Activated CD8-positive, alpha-beta T cell treated with anti-CD3 and anti-CD28 coated beads for 36 hours (primary cell): ENCODE measurements at regions of chr11 and their contacts with region 1.

Region 1: GRCh38 chr11:34105079-34105956 is at the start of gene NAT10:
- DNase-seq: peak; percentile 98
- ATAC-seq: peak; percentile 93
- H3K4me3 Mint-ChIP-seq: peak within 1 kb of the TSS; percentile 97
- H3K27ac Mint-ChIP-seq: peak within 1 kb of the TSS; percentile 97
- H3K4me1 Mint-ChIP-seq: peaks cover 42% of the 10 kb centered on the region
- H3K27me3 Mint-ChIP-seq: no peaks in the 10 kb centered on the region
- CTCF ChIP-seq: no peak
- total RNA-seq, gene NAT10: 129 to 137 TPM

Region 2: GRCh38 chr11:34051349-34052035 is 53.8 kb before region 1 on chr11 and contains the start of gene CAPRIN1:
- CTCF ChIA-PET with region 1: no interaction called
- POLR2A ChIA-PET with region 1: interaction called, 13 read pairs
- intact Hi-C with region 1: loop called (anchors 2 kb)
- DNase-seq: peak; percentile 88
- ATAC-seq: peak; percentile 79
- H3K4me3 Mint-ChIP-seq: peak within 1 kb of the TSS; percentile 97
- H3K27ac Mint-ChIP-seq: peak within 1 kb of the TSS; percentile 99
- H3K4me1 Mint-ChIP-seq: peaks cover 15% of the 10 kb centered on the region
- H3K27me3 Mint-ChIP-seq: no peaks in the 10 kb centered on the region
- CTCF ChIP-seq: no peak
- total RNA-seq, gene CAPRIN1: 297 to 328 TPM

Region 3: GRCh38 chr11:34068111-34068510 is 37.2 kb before region 1 on chr11:
- CTCF ChIA-PET with region 1: no interaction called
- POLR2A ChIA-PET with region 1: interaction called, 12 read pairs
- intact Hi-C with region 1: no loop called
- DNase-seq: no peak
- ATAC-seq: no peak
- H3K4me3 Mint-ChIP-seq: no peak overlapping the region
- H3K27ac Mint-ChIP-seq: peak overlapping the region; percentile 41
- H3K4me1 Mint-ChIP-seq: peaks cover 64% of the 10 kb centered on the region
- H3K27me3 Mint-ChIP-seq: no peaks in the 10 kb centered on the region
- CTCF ChIP-seq: no peak

Region 4: DNA sequence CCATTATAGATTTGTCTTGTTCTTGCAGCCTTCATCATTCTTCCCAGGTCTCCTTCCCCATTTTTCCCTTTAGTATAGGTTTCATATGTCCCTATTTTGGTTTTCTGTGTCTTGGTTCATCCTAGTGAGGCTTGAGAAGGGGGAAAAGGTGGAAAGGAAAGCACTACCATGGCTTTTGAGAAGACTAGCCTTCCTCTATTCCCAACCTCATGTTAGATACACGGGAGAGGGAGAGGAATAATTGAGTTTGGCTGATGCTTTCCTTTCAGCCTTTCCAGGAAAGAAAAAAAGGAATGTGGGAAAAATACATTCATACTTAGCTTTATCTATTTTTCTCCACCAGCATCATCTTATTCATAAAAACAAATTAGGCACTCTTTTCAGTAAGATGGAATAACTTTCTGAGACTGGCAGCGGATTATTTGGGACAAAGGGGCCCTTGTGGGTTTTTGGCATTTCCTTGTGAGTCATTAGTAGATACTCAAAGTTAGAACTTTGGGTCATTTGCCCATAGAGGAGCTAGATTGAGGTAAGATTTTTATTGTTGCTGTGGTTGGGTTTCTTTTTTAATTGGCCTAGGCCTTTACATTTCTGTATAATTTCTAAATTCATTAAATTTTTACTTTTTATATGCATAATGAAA is 30.0 kb before region 1 on chr11:
- CTCF ChIA-PET with region 1: interaction called, 3 read pairs
- POLR2A ChIA-PET with region 1: interaction called, 12 read pairs
- intact Hi-C with region 1: no loop called
- DNase-seq: no peak
- ATAC-seq: no peak
- H3K4me3 Mint-ChIP-seq: no peak overlapping the region
- H3K27ac Mint-ChIP-seq: peak overlapping the region; percentile 67
- H3K4me1 Mint-ChIP-seq: peaks cover 41% of the 10 kb centered on the region
- H3K27me3 Mint-ChIP-seq: no peaks in the 10 kb centered on the region
- CTCF ChIP-seq: no peak

Region 5: GRCh38 chr11:34084637-34085036 is 20.7 kb before region 1 on chr11:
- CTCF ChIA-PET with region 1: interaction called, 4 read pairs
- POLR2A ChIA-PET with region 1: interaction called, 11 read pairs
- intact Hi-C with region 1: no loop called
- DNase-seq: no peak
- ATAC-seq: no peak
- H3K4me3 Mint-ChIP-seq: no peak overlapping the region
- H3K27ac Mint-ChIP-seq: peak overlapping the region; percentile 41
- H3K4me1 Mint-ChIP-seq: peaks cover 12% of the 10 kb centered on the region
- H3K27me3 Mint-ChIP-seq: no peaks in the 10 kb centered on the region
- CTCF ChIP-seq: no peak